SK-N-SH (cell line): ENCODE measurements at regions of chr10 and their contacts with region 1.

Region 1: DNA sequence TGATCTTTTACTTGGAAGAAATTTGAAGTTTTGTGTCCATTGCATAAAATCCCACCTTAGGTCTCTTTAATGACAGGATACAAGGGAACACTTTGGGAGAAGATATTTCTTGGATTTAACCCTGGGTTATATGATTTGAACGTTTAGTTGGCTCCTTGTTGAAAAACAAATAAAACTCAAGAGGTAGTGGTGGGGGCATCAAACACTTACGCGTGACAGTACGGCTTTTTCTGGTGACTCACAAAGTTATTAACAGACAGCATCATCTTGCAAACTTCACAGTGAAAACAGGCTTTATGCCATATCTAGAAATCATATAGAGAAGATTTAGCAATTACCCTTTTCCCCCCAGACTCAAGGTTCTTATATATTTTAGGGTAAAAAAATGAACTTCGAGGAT is 699 bp downstream of the NRAP start:
- DNase-seq: no peak
- H3K4me3 ChIP-seq: no peak overlapping the region
- H3K27ac ChIP-seq: no peak overlapping the region
- H3K4me1 ChIP-seq: peaks cover 0 to 11% of the 10 kb centered on the region in 2 experiments; a peak in 2 of 4 replicates
- H3K27me3 ChIP-seq: no peaks in the 10 kb centered on the region; the same call in 1 of the 2 replicates
- CTCF ChIP-seq: no peak
- EP300 ChIP-seq: no peak
- RAD21 ChIP-seq: no peak

Region 2: GRCh38 chr10:113678690-113679462 is 15.7 kb after region 1 on chr10:
- CTCF ChIA-PET with region 1: interaction called, 13 read pairs
- POLR2A ChIA-PET with region 1: no interaction called
- DNase-seq: peak; percentile 85
- H3K4me3 ChIP-seq: peak overlapping the region; percentile 89 to 98
- H3K27ac ChIP-seq: peak overlapping the region; percentile 77 to 82
- H3K4me1 ChIP-seq: peaks cover 0 to 6% of the 10 kb centered on the region in 2 experiments; a peak in 1 of 4 replicates
- H3K27me3 ChIP-seq: no peaks in the 10 kb centered on the region
- CTCF ChIP-seq: peak; percentile 74
- EP300 ChIP-seq: no peak
- RAD21 ChIP-seq: peak; percentile 42